ENCODE measurements at regions of chr11 and their contacts with region 1.

Region 1: GRCh38 chr11:128522055-128522942 is 65.1 kb downstream of the ETS1 start:
- DNase-seq: peak; percentile 95
- H3K4me3 ChIP-seq: peak overlapping the region; percentile 95
- CTCF ChIP-seq: no peak

Region 2: GRCh38 chr11:128180446-128181087 is 341.7 kb before region 1 on chr11:
- in situ Hi-C with region 1: loop called (anchors 10 kb)
- DNase-seq: peak; percentile 75
- H3K4me3 ChIP-seq: no peak overlapping the region
- CTCF ChIP-seq: no peak

Region 3: GRCh38 chr11:128448200-128448886 is 74.0 kb before region 1 on chr11:
- in situ Hi-C with region 1: loop called (anchors 5 kb)
- DNase-seq: peak; percentile 78
- H3K4me3 ChIP-seq: no peak overlapping the region
- CTCF ChIP-seq: no peak

Region 4: DNA sequence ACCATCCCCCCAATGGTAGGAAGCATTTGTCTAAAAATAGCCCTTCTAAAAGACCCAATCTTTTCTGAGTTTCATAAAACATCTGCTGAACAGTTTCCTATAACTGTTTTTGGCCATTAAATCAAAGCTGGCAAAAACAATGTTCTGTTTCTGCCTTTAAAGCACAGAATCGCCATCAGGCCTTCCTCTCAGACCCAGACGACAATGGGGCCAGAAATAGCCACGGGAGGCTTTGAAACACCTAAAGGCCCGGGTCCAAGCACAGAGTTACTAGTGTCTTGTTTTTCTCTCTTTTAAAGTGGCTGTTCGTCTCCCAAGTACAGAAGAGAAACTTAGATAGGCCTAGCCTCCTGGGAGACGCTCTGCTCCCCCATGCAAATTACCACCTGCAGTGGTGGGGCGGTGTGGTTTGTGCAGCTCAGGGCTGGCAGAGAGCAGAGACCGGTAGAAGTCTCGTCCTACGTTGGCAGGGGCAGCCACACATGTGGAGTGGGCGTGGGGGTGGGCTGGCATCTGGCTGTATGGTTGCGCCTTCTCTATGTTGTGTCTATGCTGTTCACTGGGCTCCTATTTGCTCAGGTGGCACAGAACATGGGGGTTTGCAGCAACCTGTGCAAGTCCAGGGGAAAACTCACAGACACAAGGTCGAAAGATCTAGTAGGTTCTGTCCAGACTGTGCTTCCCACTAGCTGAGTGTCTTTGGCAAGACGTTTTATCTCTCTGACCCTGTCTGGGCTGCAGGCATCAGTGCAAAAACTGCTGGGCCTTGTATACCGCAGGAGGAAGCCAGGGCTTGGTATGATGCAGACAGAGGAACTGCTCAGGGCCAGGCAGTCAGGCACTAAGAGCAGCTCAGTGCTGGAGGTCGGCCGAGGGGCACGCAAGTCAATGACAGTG is 88.7 kb after region 1 on chr11:
- in situ Hi-C with region 1: loop called (anchors 25 kb)
- DNase-seq: no peak
- H3K4me3 ChIP-seq: no peak overlapping the region
- CTCF ChIP-seq: no peak

Measured in astrocyte of the cerebellum (primary cell).